Lower leg skin (tissue), 4 donors: ENCODE measurements at regions of chr12 and their contacts with region 1.

Region 1: DNA sequence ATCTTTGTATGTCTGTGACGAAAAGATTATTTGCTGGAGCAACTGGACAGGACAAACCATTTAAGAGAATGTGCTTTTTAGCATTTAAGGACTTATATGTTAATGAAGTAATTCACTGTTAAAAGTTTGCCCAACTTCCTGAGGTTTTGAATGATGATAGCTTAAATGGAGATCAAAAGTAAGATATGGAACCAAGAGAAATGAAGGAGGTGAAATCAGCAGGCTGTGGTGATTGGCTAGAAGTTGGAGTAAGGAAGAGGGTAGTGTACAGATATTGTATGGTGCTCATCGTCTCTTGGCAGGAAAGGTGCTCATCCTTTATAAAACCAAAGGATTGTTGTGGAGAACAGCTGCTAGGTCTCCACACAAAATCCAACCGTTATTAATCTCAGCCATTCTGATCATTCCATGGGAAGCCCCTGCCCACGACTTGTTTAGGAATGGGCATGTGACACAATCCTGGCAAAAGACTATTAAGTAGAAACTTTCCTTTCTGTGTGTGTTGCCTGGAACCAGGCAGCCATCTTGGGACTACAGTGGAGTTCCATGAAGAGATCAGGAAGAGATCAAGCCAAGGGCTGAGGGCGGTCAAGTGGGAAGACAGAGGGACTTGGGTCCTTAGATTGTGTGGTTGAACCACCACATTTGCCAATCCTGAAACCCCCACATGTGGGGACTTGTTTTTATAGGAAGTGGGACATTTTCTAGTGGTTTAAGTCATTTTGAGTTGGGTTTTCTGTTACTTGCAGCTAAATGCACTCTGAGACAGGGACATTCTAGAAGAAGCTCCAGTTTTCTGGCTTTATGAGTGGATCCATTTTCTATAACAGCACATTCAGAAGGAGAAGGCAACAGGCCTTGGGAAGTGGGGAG is 56.8 kb upstream of the CHST11 start:
- DNase-seq: no peak
- H3K4me3 ChIP-seq: no peak overlapping the region
- CTCF ChIP-seq: no peak
- POLR2A ChIP-seq: no peak

Region 2: DNA sequence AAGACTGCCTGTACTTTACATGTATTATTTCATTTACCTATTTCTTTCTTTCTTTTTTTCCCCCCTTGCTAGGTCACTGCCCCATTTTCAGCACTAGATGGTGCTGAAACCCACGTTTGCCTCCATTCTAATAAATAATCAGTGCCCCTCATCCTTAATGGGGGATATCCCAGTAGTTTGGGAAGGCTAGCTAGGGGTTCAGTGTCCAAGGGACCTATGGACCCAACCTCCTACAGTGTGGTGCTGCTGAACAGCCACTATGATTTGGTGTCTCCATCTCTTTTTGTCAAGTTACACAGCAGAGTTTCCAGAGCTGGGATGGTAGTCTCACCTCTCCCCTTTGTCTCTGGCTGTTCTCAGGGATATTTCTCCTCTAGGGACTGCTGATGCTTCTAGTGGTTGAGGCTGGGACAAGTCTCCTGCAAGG is 342.2 kb before region 1 on chr12:
- intact Hi-C with region 1: no loop called
- DNase-seq: no peak
- H3K4me3 ChIP-seq: no peak overlapping the region
- CTCF ChIP-seq: no peak
- POLR2A ChIP-seq: no peak

Region 3: GRCh38 chr12:104334581-104334980 is 65.4 kb before region 1 on chr12:
- intact Hi-C with region 1: no loop called
- DNase-seq: no peak
- H3K4me3 ChIP-seq: no peak overlapping the region
- CTCF ChIP-seq: no peak
- POLR2A ChIP-seq: no peak

Region 4: DNA sequence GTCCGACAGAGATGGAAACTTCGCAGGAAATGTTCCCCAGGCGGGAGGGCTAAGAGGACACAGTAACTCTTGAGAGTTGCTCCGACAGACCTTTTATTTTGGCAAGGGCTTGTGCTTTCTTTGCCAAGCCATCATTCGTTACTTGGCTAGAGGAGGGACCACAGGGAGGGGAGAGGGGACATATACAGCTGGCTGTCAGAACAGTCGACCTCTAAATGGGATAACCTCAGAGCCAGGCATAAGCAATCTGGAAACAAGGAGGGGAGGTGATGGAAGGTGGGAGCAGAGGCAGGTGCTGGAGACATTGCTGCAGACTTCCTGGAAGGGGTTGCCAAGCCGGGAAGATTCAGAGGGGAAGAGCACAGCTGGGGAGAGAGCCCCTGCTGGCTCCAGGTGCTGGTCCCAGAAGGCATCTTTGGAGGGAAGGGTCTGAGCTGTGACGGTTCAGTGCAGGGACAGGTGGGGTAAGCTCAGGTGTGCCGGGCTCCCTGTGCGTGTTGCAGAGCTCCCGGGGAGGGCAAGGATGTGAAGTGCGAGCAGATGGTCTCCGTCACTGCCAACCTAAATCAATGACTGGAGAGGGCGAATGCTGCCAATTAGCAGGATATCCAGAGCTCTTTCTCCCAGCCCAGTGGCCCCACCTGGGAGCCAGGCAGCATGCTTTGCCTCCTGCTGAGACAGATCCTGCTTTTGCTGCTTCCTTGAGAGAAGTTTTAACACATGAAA is 106.9 kb after region 1 on chr12:
- intact Hi-C with region 1: no loop called
- DNase-seq: no peak
- H3K4me3 ChIP-seq: no peak overlapping the region
- CTCF ChIP-seq: no peak
- POLR2A ChIP-seq: no peak

Region 5: DNA sequence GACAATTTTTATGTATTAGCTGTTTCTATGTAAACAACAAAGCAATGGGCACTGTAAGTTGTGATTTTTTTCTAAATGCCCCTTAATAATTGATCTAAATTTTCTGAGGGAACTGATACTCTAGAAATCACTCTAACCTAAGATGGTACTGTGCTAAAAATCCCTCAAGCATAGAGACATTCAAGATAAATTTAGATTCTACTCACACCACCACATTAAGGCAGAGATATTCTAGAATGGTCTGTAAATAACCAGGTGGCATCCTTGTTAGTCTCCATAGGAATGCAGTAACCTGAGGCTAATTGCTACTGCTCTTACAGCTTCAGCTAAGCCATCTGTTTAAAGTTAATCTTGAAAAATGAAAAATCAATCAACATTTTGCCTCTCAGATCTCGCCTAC is 470.8 kb after region 1 on chr12:
- intact Hi-C with region 1: loop called (anchors 5 kb)
- DNase-seq: no peak
- H3K4me3 ChIP-seq: no peak overlapping the region
- CTCF ChIP-seq: no peak
- POLR2A ChIP-seq: no peak